ENCODE measurements at regions of chr1 and their contacts with region 1.

Region 1: GRCh38 chr1:193270996-193271395 is 84.6 kb upstream of the B3GALT2 start:
- DNase-seq: no peak
- H3K4me3 ChIP-seq: no peak overlapping the region
- H3K27ac ChIP-seq: no peak overlapping the region
- H3K4me1 ChIP-seq: no peaks in the 10 kb centered on the region
- H3K27me3 ChIP-seq: no peaks in the 10 kb centered on the region
- CTCF ChIP-seq: no peak

Region 2: DNA sequence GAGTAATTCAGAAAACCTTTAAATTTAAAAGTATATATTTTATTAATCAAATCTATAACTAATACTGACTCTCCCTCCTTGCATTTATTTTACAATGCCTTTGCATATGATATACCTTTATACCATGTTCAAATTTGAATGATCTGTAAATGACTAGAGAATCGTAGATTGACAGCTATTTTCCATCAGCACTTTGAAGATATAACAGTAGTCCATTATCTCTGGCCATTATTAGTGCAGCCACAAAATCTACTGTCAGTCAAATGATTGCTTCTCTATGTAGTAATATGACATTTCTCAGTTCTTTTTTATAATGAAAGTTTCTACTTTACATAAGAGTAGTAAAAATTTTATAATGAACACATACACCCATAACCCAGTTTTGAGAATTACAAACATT is 970.2 kb after region 1 on chr1:
- CTCF ChIA-PET with region 1: no interaction called
- POLR2A ChIA-PET with region 1: interaction called, 18 read pairs
- intact Hi-C with region 1: no loop called
- DNase-seq: no peak
- H3K4me3 ChIP-seq: no peak overlapping the region
- H3K27ac ChIP-seq: no peak overlapping the region
- H3K4me1 ChIP-seq: no peaks in the 10 kb centered on the region
- H3K27me3 ChIP-seq: no peaks in the 10 kb centered on the region
- CTCF ChIP-seq: no peak

Measured in PC-9 (cell line).